Head of caudate nucleus (tissue), 42 donors: ENCODE measurements at regions of chr10 and their contacts with region 1.

Region 1: DNA sequence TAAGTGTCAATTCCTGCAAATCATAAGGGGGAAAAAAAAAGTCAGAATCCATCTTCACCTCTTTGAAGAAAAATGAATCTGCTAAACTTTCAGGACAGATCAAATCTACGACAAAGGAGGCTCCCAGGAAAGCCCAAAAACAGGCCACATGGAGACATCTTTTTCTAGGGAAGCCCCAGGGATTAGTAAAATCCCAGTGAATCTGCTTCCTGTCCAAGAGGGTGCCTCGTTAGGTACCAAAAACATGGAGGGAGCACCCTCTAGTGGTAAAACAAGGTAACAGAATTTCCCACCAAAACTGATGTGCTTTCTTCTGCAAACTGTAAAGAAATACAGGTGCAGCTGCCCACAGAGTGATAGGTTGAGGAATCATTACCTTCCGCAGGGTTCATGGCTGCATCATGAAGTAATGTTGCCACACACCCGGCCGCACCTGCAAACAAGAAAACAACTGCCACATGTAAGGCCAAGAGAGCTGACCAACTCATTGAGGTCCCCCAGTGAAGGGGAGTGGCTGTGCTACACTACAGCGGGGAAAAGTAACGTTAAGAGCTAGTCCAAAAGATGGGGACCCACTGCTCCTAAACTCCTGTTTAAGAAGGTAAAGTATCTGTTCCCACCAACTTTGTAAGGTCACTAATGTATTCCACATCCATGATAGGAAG is 7.9 kb downstream of the SLC25A28 start:
- DNase-seq: peak in 20 of 42 donors; percentile 6 to 76 (median 47)

Region 2: GRCh38 chr10:99393036-99393435 is 219.3 kb before region 1 on chr10:
- intact Hi-C with region 1: loop called (anchors 2 kb)
- DNase-seq: no peak

Region 3: DNA sequence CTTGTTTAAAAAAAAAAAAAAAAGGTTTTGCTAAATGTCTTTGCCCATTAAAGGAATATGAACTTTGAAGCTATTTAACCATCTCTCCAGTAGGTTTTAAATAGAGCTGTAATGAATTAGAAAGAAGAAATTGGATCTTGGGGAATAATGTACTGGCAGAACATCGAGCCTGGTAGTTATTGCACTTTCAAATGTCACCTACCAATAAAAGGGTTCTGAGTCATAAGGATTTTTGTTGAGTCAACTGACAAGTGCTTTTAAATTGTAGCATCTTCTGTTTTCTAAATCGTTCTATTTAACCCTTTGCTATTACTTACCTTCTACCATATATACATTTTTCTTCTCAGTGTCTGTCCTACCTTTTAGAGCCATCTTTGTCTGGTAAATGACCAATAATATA is 130.4 kb after region 1 on chr10:
- intact Hi-C with region 1: no loop called
- DNase-seq: peak in 1 of 42 donors; percentile 10

Region 4: GRCh38 chr10:99834410-99834809 is 222.1 kb after region 1 on chr10:
- intact Hi-C with region 1: no loop called
- DNase-seq: no peak

Region 5: DNA sequence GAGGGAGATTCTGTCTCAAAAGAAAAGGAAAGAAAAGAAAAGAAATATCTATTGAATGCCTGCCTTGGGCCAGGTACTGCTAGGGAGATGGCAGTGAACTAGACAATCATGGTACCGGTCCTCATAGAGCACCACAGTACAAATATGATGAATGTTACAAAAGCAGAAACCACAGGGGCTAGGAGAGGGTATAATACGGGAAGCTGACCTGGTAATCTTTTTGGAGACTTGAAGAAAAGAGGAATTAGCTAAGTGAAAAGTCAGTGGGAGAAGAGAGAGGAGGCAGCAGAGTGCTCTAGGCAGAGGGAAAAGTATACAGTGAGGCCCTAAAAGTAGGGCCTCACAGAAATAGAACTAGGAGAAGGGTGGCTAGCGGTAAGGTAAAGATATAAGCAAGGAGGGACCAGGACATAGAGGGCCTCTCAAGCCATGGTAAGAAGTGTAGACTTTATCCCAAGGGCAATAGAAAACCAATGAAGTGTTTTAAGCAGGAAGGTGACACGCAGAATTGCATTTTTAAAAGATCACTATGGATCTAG is 807.7 kb after region 1 on chr10:
- intact Hi-C with region 1: no loop called
- DNase-seq: peak in 1 of 42 donors; percentile 10